ENCODE measurements at regions of chr16 and their contacts with region 1.

Region 1: GRCh38 chr16:74931445-74931844 is 53.5 kb downstream of the WDR59 start:
- DNase-seq: no peak
- ATAC-seq: no peak
- H3K4me3 ChIP-seq: no peak overlapping the region
- H3K27ac ChIP-seq: no peak overlapping the region
- H3K4me1 ChIP-seq: no peaks in the 10 kb centered on the region
- H3K27me3 ChIP-seq: no peaks in the 10 kb centered on the region
- CTCF ChIP-seq: no peak

Region 2: DNA sequence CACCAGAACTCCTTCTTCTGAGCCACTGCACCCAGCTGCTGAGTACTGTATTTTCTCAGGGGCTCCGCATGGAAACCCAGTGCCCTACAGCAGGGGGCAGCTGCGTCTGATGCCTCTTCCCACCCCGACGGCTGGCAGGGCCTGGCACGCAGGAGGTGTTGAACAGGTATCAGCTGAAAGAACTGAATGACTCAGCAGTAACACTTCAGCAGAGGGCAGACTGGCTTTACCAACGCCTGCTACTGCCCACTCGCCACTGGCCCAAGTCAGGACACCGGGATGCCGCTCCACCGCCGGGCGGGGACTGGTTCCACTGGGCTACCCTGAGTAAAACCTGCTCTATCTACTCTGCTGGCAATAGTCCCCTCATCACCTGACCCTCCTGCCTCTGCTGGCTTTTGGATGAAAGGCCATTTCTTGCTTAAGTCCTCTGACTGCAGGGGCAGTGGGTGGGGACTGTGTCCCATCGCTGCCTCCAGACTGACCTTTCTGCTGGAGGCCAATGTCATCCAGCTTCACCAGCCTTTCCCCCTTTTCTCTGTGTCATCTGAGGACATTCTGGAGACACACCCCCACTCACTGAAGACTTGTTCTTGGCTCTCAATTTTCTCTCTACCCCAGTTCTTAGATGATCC is 56.4 kb before region 1 on chr16:
- CTCF ChIA-PET with region 1: no interaction called
- POLR2A ChIA-PET with region 1: no interaction called
- in situ Hi-C with region 1: no loop called
- intact Hi-C with region 1: no loop called
- DNase-seq: no peak
- ATAC-seq: no peak
- H3K4me3 ChIP-seq: no peak overlapping the region
- H3K27ac ChIP-seq: no peak overlapping the region
- H3K4me1 ChIP-seq: no peaks in the 10 kb centered on the region
- H3K27me3 ChIP-seq: no peaks in the 10 kb centered on the region
- CTCF ChIP-seq: no peak

Region 3: DNA sequence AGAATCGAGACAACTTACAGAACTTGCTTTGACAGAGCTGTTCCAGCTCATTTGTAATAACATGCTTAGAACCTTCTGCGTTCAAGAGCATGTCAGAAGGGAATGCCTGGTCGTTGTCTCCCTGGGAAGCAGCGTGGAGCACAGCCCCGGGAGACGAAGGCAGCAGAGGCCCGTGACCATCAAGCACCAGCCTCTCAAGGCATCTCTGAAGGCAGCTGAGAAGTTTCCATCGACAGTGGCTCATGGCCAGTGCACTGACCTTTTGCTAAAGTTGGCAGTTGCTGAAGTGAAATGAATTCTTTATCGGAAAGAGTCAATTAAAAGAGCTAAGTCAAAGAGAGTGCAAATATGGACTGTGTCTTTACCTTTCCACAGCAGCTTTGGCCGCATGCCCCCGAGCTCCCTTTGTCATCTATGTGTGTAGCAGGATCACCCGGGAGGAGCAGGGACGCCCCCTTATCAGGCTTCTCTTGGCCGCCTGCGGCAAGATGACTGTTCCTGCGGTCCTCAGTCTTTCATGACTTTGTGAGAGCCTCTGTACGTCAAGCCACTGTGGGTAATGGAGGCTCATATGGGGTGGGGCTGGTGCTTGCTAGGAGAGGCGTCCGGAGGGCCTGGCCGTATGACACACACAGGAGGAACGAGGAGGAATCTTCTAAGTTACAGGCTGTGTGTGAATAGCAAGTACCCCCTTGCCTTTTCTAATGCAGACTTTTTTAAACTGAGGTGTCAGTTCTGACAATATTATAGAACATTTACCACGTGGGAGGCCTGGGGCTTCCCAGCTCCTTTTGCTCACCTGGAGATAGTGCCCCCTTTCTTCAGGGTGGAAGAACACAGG is 130.9 kb after region 1 on chr16:
- CTCF ChIA-PET with region 1: interaction called, 12 read pairs
- POLR2A ChIA-PET with region 1: no interaction called
- in situ Hi-C with region 1: no loop called
- intact Hi-C with region 1: no loop called
- DNase-seq: no peak
- ATAC-seq: peak; percentile 37; the same call in 1 of the 2 replicates
- H3K4me3 ChIP-seq: no peak overlapping the region
- H3K27ac ChIP-seq: peak overlapping the region; percentile 65
- H3K4me1 ChIP-seq: peaks cover 31% of the 10 kb centered on the region
- H3K27me3 ChIP-seq: no peaks in the 10 kb centered on the region
- CTCF ChIP-seq: no peak; the same call in 1 of the 2 replicates

Measured in Panc1 (cell line).